ENCODE measurements at regions of chr16 and their contacts with region 1.

Region 1: DNA sequence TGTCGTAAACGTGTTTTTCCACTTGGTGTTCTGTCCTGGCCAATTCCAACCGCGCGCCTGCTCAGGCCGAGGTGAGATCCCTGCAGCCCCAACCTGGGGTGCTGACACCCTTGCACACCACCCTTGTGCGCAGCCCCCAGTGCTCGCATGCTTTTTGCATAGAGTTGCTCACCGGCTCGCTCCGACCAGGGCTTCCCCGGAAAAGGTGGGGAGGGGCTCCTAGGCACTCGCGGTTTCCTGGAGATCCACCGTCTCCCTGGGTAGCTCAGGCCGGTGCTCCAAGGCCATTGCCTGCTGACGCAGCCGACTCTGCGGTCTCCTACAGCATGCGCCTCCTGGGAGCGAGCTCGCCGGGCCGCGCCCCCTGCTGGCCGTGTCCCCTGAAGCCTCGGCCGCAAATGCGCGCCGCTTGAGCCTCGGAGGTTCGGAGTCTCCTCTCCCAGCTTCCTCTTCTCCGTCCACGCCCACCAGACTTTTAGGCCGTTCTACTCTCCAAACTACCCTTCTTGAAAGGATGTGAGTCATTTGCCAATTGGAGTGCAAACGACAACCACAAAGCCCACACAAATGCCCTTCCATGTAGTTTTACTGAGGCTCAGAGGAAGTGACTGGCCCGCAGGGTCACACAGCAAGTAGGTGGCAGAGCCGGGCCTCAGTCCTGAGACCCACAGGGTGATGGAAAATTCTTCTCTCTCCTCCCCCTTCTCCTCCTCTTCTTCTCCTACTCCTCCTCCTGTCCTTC is 7.2 kb upstream of the PDP2 start:
- DNase-seq: peak; percentile 90 to 96 (median 93)
- ATAC-seq: peak; percentile 84 to 96 (median 96)
- H3K4me3 ChIP-seq: peak overlapping the region in 10 of 12 donors; percentile 27 to 58 (median 46)
- H3K27ac ChIP-seq: peak overlapping the region in 7 of 12 donors; percentile 7 to 77 (median 49)
- H3K4me1 ChIP-seq: peaks cover 0 to 25% (median 5%) of the 10 kb centered on the region in 12 donors
- H3K27me3 ChIP-seq: no peaks in the 10 kb centered on the region
- CTCF ChIP-seq: peak; percentile 86 to 99 (median 94)
- POLR2A ChIP-seq: no peak

Region 2: GRCh38 chr16:66660422-66661209 is 212.5 kb before region 1 on chr16:
- intact Hi-C with region 1: loop called in 3 of 10 experiments (anchors 2 to 5 kb)
- DNase-seq: peak; percentile 71 to 82 (median 75)
- ATAC-seq: peak; percentile 93 to 97 (median 97)
- H3K4me3 ChIP-seq: no peak overlapping the region
- H3K27ac ChIP-seq: peak overlapping the region; percentile 0 to 78 (median 62)
- H3K4me1 ChIP-seq: peaks cover 3 to 32% (median 25%) of the 10 kb centered on the region in 12 donors
- H3K27me3 ChIP-seq: no peaks in the 10 kb centered on the region
- CTCF ChIP-seq: peak in 7 of 12 donors; percentile 5 to 52 (median 33)
- POLR2A ChIP-seq: no peak

Region 3: GRCh38 chr16:66717112-66717675 is 155.9 kb before region 1 on chr16:
- intact Hi-C with region 1: loop called in 2 of 10 experiments (anchors 5 to 10 kb)
- DNase-seq: peak in 2 of 5 donors; percentile 27 to 35
- ATAC-seq: peak; percentile 38 to 82 (median 67)
- H3K4me3 ChIP-seq: no peak overlapping the region
- H3K27ac ChIP-seq: no peak overlapping the region
- H3K4me1 ChIP-seq: peaks cover 0 to 6% (median 0%) of the 10 kb centered on the region in 12 donors
- H3K27me3 ChIP-seq: no peaks in the 10 kb centered on the region
- CTCF ChIP-seq: peak; percentile 31 to 67 (median 38)
- POLR2A ChIP-seq: no peak

Region 4: DNA sequence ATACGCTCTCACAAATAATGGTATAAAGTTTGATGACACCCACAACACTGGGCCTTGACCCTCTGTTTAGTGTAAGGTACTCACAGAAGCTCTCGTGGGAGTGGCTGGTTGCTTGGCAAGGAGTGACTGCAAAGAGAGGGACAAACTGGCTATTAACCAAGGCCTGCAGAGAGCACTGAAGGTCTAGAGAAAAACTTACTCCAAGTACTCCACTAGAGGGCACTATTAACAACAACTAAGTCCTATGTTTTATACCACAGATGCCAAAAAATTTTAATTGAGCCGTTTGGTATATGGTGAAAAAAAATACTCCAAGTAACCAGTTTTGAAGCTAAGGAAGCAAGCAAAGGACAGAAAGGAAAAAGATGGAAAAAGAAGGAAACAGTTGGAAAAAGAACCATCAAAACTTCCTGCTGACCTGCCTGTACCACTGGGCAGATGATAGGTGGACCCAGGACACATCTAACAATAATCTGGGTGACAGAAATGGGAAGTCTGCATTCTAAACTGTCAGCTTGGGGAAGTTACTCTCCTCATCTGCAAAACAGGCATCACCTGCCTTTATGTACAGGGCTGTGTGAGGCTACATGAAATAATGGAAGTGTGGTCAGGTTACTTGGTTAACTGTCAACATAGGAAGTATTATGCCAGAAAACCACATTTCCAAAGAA is 144.9 kb before region 1 on chr16:
- intact Hi-C with region 1: loop called in 7 of 10 experiments (anchors 2 to 10 kb)
- DNase-seq: peak in 4 of 5 donors; percentile 30 to 47 (median 40)
- ATAC-seq: peak; percentile 75 to 88 (median 83)
- H3K4me3 ChIP-seq: no peak overlapping the region
- H3K27ac ChIP-seq: no peak overlapping the region
- H3K4me1 ChIP-seq: peaks cover 0 to 15% (median 4%) of the 10 kb centered on the region in 12 donors
- H3K27me3 ChIP-seq: no peaks in the 10 kb centered on the region
- CTCF ChIP-seq: peak; percentile 46 to 80 (median 70)
- POLR2A ChIP-seq: no peak

Region 5: DNA sequence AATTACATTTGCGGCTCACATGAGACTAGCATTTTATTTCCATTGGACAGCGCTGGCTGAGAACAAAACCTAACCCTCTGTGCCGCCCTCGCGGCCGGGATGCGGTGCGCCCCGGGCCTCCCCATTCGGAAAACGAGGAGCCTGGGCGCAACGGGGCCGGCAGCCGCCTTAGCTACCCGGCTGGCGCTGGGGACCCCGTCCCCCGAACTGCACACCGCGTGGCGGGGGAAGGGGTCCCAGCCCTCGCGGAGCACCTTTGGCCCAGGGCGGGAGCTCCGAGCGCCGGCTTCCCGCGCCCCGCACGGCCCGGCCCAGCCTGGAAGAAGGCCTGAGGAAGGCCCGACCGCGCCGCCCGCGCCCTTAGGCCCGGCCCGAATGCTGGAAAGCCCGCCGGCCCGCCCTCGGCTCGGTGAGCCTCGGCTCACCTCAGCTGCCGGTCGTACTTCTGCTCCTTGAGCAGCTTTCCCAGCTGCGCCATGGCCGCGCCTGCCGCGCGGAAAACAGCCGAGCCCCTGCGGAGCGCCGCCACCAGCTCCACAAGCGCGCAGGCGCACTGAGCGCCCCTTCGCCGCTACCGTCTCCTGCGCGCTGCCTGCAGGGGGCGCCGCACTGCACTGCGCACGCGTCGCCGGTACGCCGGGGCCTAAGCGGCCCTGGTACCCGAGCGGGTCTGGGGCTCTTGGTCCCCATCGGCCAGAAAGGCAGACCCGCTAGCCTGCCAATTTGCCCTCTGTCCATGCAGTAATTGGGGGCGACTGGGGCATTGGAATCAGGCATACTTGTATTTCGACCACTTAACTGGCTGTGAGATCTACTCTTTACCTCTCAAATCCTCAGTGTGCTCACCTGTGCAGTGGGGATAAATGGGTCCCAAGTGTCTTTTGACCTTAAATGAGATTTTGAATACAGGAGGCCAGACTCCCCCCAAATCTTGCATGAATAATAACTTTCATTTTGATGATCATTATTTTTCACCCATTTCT is 42.4 kb before region 1 on chr16 and contains the start of gene NAE1:
- intact Hi-C with region 1: loop called in 6 of 10 experiments (anchors 2 to 5 kb)
- DNase-seq: peak; percentile 85 to 95 (median 90)
- ATAC-seq: peak; percentile 89 to 99 (median 98)
- H3K4me3 ChIP-seq: peak within 1 kb of the TSS; percentile 67 to 95 (median 84)
- H3K27ac ChIP-seq: peak within 1 kb of the TSS; percentile 66 to 94 (median 86)
- H3K4me1 ChIP-seq: peaks cover 0 to 28% (median 15%) of the 10 kb centered on the region in 12 donors
- H3K27me3 ChIP-seq: no peaks in the 10 kb centered on the region
- CTCF ChIP-seq: peak; percentile 97 to 99 (median 99)
- POLR2A ChIP-seq: peak in 1 of 2 donors; percentile 79
- total RNA-seq, gene NAE1: 25.6 to 39.3 (median 29.6) TPM

Measured in heart left ventricle (tissue), 16 donors.